ENCODE measurements at regions of chr9 and their contacts with region 1.

Region 1: GRCh38 chr9:87713278-87713987 is 12.5 kb upstream of the CTSL start:
- DNase-seq: no peak
- H3K4me3 Mint-ChIP-seq: no peak overlapping the region
- H3K27ac Mint-ChIP-seq: peak overlapping the region; percentile 24
- H3K4me1 Mint-ChIP-seq: peaks cover 27% of the 10 kb centered on the region
- H3K27me3 Mint-ChIP-seq: peaks cover 12% of the 10 kb centered on the region

Region 2: GRCh38 chr9:87766703-87767102 is 53.3 kb after region 1 on chr9:
- intact Hi-C with region 1: loop called (anchors 5 kb)
- DNase-seq: no peak
- H3K4me3 Mint-ChIP-seq: no peak overlapping the region
- H3K27ac Mint-ChIP-seq: peak overlapping the region; percentile 28
- H3K4me1 Mint-ChIP-seq: peaks cover 8% of the 10 kb centered on the region
- H3K27me3 Mint-ChIP-seq: peaks cover 12% of the 10 kb centered on the region

Measured in activated T-helper 2 cell treated with anti-CD3 and anti-CD28 coated beads, Interferon-gamma antibody, Interleukin-2, Interleukin-4, amounts not matched to agents 10 μg/mL and 5 μg/mL and 100 μg/mL, durations not matched to agents 14 hours and 24 hours and 36 hours (primary cell).